ENCODE measurements at regions of chr10 and their contacts with region 1.

Region 1: GRCh38 chr10:93784059-93784458 is 26.3 kb downstream of the LGI1 start:
- DNase-seq: no peak

Region 2: GRCh38 chr10:93357680-93358079 is 426.4 kb before region 1 on chr10:
- intact Hi-C with region 1: no loop called
- DNase-seq: no peak

Region 3: GRCh38 chr10:93715345-93715744 is 68.7 kb before region 1 on chr10:
- intact Hi-C with region 1: loop called in 1 of 2 experiments (anchors 2 kb)
- DNase-seq: no peak